Activated CD8-positive, alpha-beta T cell treated with anti-CD3 and anti-CD28 coated beads for 36 hours (primary cell): ENCODE measurements at regions of chrX and their contacts with region 1.

Region 1: GRCh38 chrX:109485470-109486340 is 3.8 kb upstream of the GUCY2F start:
- DNase-seq: peak; percentile 73
- ATAC-seq: peak; percentile 73
- H3K4me3 Mint-ChIP-seq: no peak overlapping the region
- H3K27ac Mint-ChIP-seq: no peak overlapping the region
- H3K4me1 Mint-ChIP-seq: no peaks in the 10 kb centered on the region
- H3K27me3 Mint-ChIP-seq: peaks cover 2% of the 10 kb centered on the region
- CTCF ChIP-seq: peak; percentile 86

Region 2: DNA sequence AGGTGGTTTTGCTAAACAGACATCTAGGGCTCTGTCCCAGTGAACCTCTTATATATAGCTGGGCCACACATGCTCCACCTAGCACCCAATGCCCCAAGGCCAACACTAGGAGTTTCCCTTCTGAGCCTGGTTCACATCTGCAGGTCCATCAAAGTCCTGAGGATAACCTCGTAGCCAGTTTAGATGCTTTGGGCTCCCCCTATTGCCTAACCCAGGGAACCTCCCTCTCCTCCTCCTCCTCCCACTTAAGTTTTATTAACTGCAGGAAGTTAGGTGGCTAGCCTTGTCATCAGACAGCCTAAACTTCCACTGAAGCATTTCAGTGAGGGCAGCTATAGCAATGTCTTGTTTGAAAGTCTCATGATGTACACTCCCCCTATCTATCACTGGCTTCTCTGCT is 91.8 kb before region 1 on chrX:
- CTCF ChIA-PET with region 1: no interaction called
- POLR2A ChIA-PET with region 1: no interaction called
- intact Hi-C with region 1: no loop called
- DNase-seq: no peak
- ATAC-seq: no peak
- H3K4me3 Mint-ChIP-seq: no peak overlapping the region
- H3K27ac Mint-ChIP-seq: no peak overlapping the region
- H3K4me1 Mint-ChIP-seq: no peaks in the 10 kb centered on the region
- H3K27me3 Mint-ChIP-seq: no peaks in the 10 kb centered on the region
- CTCF ChIP-seq: no peak

Region 3: GRCh38 chrX:109498434-109498833 is 12.7 kb after region 1 on chrX:
- CTCF ChIA-PET with region 1: interaction called, 16 read pairs
- POLR2A ChIA-PET with region 1: no interaction called
- intact Hi-C with region 1: no loop called
- DNase-seq: no peak
- ATAC-seq: no peak
- H3K4me3 Mint-ChIP-seq: no peak overlapping the region
- H3K27ac Mint-ChIP-seq: no peak overlapping the region
- H3K4me1 Mint-ChIP-seq: no peaks in the 10 kb centered on the region
- H3K27me3 Mint-ChIP-seq: peaks cover 3% of the 10 kb centered on the region
- CTCF ChIP-seq: no peak

Region 4: GRCh38 chrX:109635176-109635575 is 149.5 kb after region 1 on chrX:
- CTCF ChIA-PET with region 1: interaction called, 22 read pairs
- POLR2A ChIA-PET with region 1: no interaction called
- intact Hi-C with region 1: loop called (anchors 10 kb)
- DNase-seq: peak; percentile 4
- ATAC-seq: peak; percentile 20
- H3K4me3 Mint-ChIP-seq: no peak overlapping the region
- H3K27ac Mint-ChIP-seq: no peak overlapping the region
- H3K4me1 Mint-ChIP-seq: peaks cover 2% of the 10 kb centered on the region
- H3K27me3 Mint-ChIP-seq: no peaks in the 10 kb centered on the region
- CTCF ChIP-seq: peak; percentile 32

Region 5: DNA sequence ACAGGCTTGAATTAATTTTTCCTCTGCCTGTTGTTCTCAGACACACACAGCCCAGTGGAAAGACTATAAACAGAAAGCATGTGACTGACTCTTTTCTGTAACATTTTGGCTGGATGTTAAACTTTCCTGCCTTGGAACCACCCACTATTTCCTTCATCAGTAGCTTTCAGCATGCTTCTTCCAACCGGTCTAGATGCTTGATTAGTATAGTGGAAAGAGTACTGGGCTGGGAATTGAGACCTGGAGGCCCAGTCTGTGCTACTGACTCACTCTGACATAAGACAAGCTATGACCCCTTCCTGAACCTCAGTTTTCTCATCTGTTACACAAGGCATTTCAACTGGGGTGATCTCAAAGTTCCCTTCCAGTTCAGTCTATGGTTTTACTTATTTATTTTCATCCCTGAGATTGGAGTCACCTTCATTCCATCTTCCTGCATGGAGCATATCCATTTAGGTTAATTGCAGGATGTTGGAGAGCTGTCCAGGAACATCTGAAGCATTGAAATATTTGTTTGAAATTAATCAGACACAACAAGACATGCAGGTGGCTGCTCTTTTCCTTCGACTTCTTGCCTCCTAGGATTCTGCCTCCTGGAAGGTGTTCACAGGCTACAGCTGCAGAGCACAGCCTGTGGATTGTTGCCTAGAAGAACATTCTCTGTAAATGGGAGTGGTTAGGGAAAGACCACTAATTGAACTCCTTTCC is 1046.3 kb after region 1 on chrX:
- CTCF ChIA-PET with region 1: no interaction called
- POLR2A ChIA-PET with region 1: no interaction called
- intact Hi-C with region 1: no loop called
- DNase-seq: no peak
- ATAC-seq: no peak
- H3K4me3 Mint-ChIP-seq: no peak overlapping the region
- H3K27ac Mint-ChIP-seq: no peak overlapping the region
- H3K4me1 Mint-ChIP-seq: no peaks in the 10 kb centered on the region
- H3K27me3 Mint-ChIP-seq: no peaks in the 10 kb centered on the region
- CTCF ChIP-seq: no peak